ENCODE measurements at regions of chr10 and their contacts with region 1.

Region 1: DNA sequence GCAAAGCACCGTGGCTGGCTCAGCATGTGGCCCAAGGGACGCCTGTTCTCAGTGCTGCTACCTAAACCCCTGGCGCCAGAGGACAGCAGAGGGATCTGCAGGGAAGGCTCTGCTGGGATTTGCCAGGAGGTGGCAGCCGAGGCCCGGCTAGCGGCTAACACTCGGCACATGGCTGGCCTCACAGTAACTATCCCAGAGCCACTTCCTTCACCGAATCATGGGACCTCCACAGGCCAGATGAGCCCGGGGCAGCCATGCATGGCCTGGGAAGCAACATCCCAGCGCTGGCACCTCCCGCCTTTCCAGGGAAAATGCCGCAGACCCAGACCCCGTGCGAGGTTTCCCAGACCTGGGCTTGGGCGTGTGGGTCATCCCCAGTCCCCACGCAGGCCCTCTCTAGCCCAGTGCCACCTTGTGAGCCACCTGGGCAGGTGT is 36.4 kb downstream of the DPYSL4 start:
- DNase-seq: peak; percentile 78 to 92 (median 88)
- H3K4me3 ChIP-seq: no peak overlapping the region
- H3K27ac ChIP-seq: no peak overlapping the region
- H3K4me1 ChIP-seq: no peaks in the 10 kb centered on the region
- H3K27me3 ChIP-seq: no peaks in the 10 kb centered on the region
- CTCF ChIP-seq: peak; percentile 91 to 99 (median 99)
- POLR2A ChIP-seq: no peak

Region 2: GRCh38 chr10:132354356-132355094 is 131.4 kb after region 1 on chr10:
- intact Hi-C with region 1: loop called (anchors 2 to 5 kb)
- DNase-seq: peak in 1 of 7 donors; percentile 8
- H3K4me3 ChIP-seq: no peak overlapping the region
- H3K27ac ChIP-seq: no peak overlapping the region
- H3K4me1 ChIP-seq: no peaks in the 10 kb centered on the region
- H3K27me3 ChIP-seq: no peaks in the 10 kb centered on the region
- CTCF ChIP-seq: no peak
- POLR2A ChIP-seq: no peak

Region 3: DNA sequence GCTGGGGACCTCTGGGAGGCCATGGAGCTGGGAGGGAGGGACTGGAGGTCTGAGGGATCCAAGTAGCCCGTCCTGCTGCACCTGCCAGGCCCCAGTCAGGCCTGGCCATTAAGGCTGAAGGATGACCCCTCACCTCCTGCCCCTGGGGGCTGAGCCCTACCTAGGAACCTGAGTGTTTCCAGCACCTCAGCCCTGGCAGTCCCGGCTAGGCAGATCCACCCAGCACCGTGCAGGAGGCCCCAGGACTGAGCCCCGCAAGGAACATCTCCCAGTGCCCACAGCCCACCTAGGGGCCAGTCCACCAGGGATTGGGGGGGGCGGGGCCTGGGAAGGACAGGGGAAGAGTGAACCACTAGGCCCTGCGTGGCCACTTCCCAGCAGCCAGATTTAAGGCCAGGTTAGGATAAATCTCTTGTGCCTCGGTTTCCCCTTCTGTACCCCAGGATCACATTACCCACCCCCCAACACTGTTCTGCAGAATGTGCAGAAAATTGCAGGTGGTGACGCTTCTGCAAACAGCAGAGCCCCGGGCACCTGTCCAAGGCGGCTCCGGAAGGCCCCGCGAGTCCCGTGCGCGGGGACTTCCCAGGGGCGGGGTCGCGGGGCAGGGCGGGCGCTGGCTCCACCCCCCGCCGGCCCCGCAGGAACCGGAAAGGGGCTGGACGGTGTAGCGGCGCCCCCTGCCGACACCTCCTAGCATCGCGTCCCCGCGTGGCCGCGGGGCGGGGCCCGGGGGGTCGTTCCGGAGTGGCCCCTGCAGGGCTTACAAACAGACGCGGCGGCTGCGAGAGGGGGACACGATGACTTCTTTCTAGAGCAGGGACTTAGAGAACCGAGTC is 229.7 kb after region 1 on chr10:
- intact Hi-C with region 1: loop called (anchors 5 kb)
- DNase-seq: peak; percentile 88 to 91 (median 90)
- H3K4me3 ChIP-seq: peak overlapping the region in 1 of 4 donors; percentile 39
- H3K27ac ChIP-seq: peak overlapping the region in 2 of 5 donors; percentile 23 to 63
- H3K4me1 ChIP-seq: peaks cover 22% of the 10 kb centered on the region in 2 donors
- H3K27me3 ChIP-seq: no peaks in the 10 kb centered on the region
- CTCF ChIP-seq: peak; percentile 78 to 99 (median 97)
- POLR2A ChIP-seq: no peak

Region 4: DNA sequence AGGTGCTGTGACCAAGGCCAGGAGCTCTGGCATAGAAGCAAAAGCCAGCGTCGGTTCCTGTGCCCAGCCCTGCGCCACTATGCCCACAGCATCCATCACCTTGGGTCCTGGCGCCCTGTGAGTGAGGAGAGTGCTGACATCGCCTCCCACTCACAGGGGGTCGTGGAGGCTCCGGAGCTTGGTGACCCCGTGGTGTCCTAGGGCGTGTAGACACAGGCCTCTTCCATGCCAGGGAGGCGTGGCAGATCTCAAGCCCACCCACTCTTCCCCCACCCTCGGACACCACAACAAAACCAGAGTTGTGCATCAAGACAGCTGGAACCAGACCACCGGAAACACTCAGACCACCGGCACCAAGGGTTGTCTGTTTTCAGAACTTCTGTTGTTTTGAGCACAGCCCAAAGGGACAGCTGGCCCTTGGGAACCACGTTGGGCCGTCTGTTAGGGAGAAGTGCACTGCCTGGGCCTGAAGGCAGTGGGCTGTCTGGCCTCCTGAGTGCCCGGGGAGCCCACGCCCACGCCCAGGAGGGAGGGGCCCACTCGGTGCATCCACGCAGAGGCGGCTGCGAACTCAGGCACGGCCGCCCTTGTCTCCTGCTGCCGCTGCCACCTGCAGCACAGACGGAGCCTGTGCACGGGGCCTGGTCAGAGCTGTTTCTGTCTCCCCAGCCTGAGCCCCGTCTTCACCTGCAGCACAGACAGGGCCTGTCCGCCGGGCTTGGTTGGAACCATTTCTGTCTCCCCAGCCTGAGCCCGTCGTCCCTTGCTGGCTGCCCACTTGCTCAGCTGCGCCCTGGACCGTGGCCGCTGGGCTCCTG is 420.7 kb after region 1 on chr10:
- intact Hi-C with region 1: loop called in 1 of 2 experiments (anchors 10 kb)
- DNase-seq: no peak
- H3K4me3 ChIP-seq: no peak overlapping the region
- H3K27ac ChIP-seq: no peak overlapping the region
- H3K4me1 ChIP-seq: no peaks in the 10 kb centered on the region
- H3K27me3 ChIP-seq: no peaks in the 10 kb centered on the region
- CTCF ChIP-seq: no peak
- POLR2A ChIP-seq: no peak

Measured in adrenal gland (tissue), 19 donors.